ENCODE measurements at regions of chr14 and their contacts with region 1.

Region 1: GRCh38 chr14:70907176-70907995 is at the start of gene PCNX1:
- DNase-seq: peak; percentile 87
- H3K4me3 Mint-ChIP-seq: peak within 1 kb of the TSS; percentile 81
- H3K27ac Mint-ChIP-seq: peak within 1 kb of the TSS; percentile 91
- H3K4me1 Mint-ChIP-seq: peaks cover 74% of the 10 kb centered on the region
- H3K27me3 Mint-ChIP-seq: no peaks in the 10 kb centered on the region
- total RNA-seq, gene PCNX1: 51.9 to 63.1 TPM

Region 2: GRCh38 chr14:70514168-70515069 is 393.0 kb before region 1 on chr14:
- CTCF ChIA-PET with region 1: no interaction called
- intact Hi-C with region 1: no loop called
- DNase-seq: no peak
- H3K4me3 Mint-ChIP-seq: no peak overlapping the region
- H3K27ac Mint-ChIP-seq: no peak overlapping the region
- H3K4me1 Mint-ChIP-seq: peaks cover 4% of the 10 kb centered on the region
- H3K27me3 Mint-ChIP-seq: no peaks in the 10 kb centered on the region

Region 3: GRCh38 chr14:70655110-70655826 is 252.1 kb before region 1 on chr14:
- CTCF ChIA-PET with region 1: no interaction called
- intact Hi-C with region 1: loop called (anchors 5 kb)
- DNase-seq: peak; percentile 92
- H3K4me3 Mint-ChIP-seq: peak overlapping the region; percentile 83
- H3K27ac Mint-ChIP-seq: peak overlapping the region; percentile 98
- H3K4me1 Mint-ChIP-seq: peaks cover 81% of the 10 kb centered on the region
- H3K27me3 Mint-ChIP-seq: no peaks in the 10 kb centered on the region

Region 4: DNA sequence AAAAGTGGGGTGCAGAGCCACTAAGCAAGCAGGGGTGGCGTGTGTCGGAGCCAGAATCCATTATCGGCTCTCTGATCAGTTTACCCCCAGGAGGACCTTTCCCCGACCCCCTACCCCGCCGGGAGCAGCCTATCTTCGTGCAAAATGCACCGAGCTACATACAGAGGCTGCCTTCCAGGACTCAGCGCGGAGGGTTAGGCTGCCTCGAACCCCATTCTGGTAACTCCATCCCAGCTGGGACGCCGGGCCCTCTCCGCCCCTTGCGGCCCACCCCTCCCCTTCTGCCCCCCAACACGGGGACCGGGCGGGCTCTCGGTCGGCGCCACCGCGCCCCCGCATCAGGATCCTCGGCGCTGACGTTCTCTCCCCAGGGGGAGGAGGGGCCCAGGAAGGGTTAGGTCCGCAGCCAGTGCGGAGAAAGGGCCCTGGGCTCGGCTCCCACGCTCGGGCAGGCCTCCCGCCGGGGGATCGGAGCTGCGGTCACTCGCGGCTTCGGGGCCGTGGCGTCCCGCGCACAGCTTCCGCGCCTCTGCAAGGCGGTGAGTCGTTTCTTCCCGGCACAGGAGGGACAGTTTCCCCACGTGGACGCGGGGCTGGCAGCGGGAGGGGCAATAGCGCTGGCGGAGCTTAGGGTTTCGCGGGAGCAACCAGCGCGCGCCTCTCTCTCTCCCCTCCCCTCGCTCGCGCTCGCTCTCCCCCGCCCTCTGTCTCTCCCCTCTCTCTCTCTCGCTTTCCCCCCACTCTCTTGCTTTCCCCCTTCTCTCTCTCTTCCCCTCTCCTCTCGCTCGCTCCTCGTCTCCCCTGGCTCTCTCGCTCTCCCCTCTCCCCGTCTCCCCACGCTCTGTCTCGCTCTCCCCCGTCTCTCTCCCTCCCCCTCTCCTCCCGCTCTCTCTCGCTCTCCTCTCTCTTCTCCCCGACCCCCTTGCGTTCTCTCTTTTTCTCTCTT is 85.5 kb before region 1 on chr14:
- CTCF ChIA-PET with region 1: interaction called, 44 read pairs
- intact Hi-C with region 1: loop called (anchors 1 kb)
- DNase-seq: peak; percentile 82
- H3K4me3 Mint-ChIP-seq: peak overlapping the region; percentile 79
- H3K27ac Mint-ChIP-seq: peak overlapping the region; percentile 53
- H3K4me1 Mint-ChIP-seq: peaks cover 20% of the 10 kb centered on the region
- H3K27me3 Mint-ChIP-seq: peaks cover 24% of the 10 kb centered on the region

Region 5: GRCh38 chr14:70919774-70920173 is 12.4 kb after region 1 on chr14:
- CTCF ChIA-PET with region 1: interaction called, 5 read pairs
- intact Hi-C with region 1: loop called (anchors 1 kb)
- DNase-seq: peak; percentile 48
- H3K4me3 Mint-ChIP-seq: peak overlapping the region; percentile 30
- H3K27ac Mint-ChIP-seq: peak overlapping the region; percentile 83
- H3K4me1 Mint-ChIP-seq: peaks cover 84% of the 10 kb centered on the region
- H3K27me3 Mint-ChIP-seq: no peaks in the 10 kb centered on the region

Region 6: DNA sequence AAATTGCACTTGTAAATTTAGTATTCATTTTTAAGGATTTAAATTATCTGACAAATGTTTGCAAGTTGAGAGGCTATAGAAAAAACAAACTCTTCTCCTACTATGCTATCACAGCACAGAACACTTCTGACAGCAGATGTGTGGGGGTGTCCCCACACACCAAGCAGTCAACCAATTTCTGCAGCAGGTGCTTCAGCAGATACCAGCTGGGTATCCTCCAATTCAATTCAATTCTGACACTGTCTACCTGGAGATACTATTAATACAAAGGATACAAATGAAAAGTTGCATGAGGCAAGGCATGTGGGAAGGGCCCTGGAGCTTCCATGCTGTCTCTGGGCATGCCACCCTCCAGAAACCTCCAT is 34.9 kb after region 1 on chr14:
- CTCF ChIA-PET with region 1: interaction called, 3 read pairs
- intact Hi-C with region 1: loop called (anchors 1 kb)
- DNase-seq: peak; percentile 25
- H3K4me3 Mint-ChIP-seq: no peak overlapping the region
- H3K27ac Mint-ChIP-seq: peak overlapping the region; percentile 86
- H3K4me1 Mint-ChIP-seq: peaks cover 75% of the 10 kb centered on the region
- H3K27me3 Mint-ChIP-seq: no peaks in the 10 kb centered on the region

Region 7: GRCh38 chr14:70972107-70972976 is 65.0 kb after region 1 on chr14:
- CTCF ChIA-PET with region 1: interaction called, 23 read pairs
- intact Hi-C with region 1: loop called (anchors 1 kb)
- DNase-seq: peak; percentile 95
- H3K4me3 Mint-ChIP-seq: no peak overlapping the region
- H3K27ac Mint-ChIP-seq: peak overlapping the region; percentile 33
- H3K4me1 Mint-ChIP-seq: peaks cover 30% of the 10 kb centered on the region
- H3K27me3 Mint-ChIP-seq: no peaks in the 10 kb centered on the region

Region 8: GRCh38 chr14:71261206-71261605 is 353.8 kb after region 1 on chr14:
- CTCF ChIA-PET with region 1: no interaction called
- intact Hi-C with region 1: no loop called
- DNase-seq: no peak
- H3K4me3 Mint-ChIP-seq: no peak overlapping the region
- H3K27ac Mint-ChIP-seq: no peak overlapping the region
- H3K4me1 Mint-ChIP-seq: no peaks in the 10 kb centered on the region
- H3K27me3 Mint-ChIP-seq: no peaks in the 10 kb centered on the region